ENCODE measurements at regions of chr17 and their contacts with region 1.

Region 1: GRCh38 chr17:7136266-7136877 is 21.8 kb upstream of the ASGR2 start:
- DNase-seq: peak; percentile 93
- H3K4me3 Mint-ChIP-seq: no peak overlapping the region
- H3K27ac Mint-ChIP-seq: no peak overlapping the region
- H3K4me1 Mint-ChIP-seq: peaks cover 17% of the 10 kb centered on the region
- H3K27me3 Mint-ChIP-seq: peaks cover 14% of the 10 kb centered on the region

Region 2: GRCh38 chr17:6913608-6914443 is 222.5 kb before region 1 on chr17:
- intact Hi-C with region 1: loop called (anchors 5 kb)
- DNase-seq: peak; percentile 92
- H3K4me3 Mint-ChIP-seq: peak overlapping the region; percentile 82
- H3K27ac Mint-ChIP-seq: no peak overlapping the region
- H3K4me1 Mint-ChIP-seq: peaks cover 20% of the 10 kb centered on the region
- H3K27me3 Mint-ChIP-seq: peaks cover 32% of the 10 kb centered on the region

Region 3: DNA sequence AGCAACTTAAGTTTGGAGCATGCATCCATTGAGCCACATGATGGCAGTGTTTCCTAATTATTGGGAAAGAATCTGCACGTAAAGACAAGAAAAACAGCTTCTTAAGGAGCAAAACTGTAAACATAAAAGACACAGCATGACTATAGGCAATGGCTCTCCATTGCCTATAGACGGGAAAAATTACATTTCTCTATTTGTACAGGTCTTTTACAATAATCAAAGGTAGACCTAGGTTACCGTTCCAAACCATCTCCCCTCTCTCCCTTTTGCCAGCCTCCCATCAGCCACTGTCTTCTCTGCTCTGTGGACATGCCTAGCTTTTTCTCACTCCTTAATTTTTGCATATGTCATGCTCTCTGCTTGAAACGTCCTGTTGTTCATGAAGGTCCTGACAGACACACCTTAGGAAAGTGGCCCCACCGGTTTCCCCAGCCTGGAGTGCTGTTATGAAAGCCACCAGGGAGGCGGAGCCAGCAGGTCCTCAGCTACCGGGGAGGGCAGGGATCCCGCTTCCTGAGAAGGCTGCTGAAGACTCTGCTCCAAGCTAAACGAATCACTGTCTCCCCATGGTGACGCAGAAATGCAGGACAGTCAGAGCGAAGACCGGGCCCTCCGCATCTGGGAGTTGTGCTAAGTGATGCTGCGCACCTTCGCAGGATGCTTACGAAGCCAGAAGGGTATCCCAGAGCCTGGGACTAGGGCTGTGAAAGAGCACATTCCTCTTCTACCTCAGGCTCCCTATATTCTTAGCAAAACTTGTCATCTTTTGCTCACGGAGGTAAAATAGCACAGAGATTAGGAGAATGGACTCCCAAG is 90.3 kb before region 1 on chr17:
- intact Hi-C with region 1: loop called (anchors 1 kb)
- DNase-seq: peak; percentile 87
- H3K4me3 Mint-ChIP-seq: peak overlapping the region; percentile 73
- H3K27ac Mint-ChIP-seq: peak overlapping the region; percentile 60
- H3K4me1 Mint-ChIP-seq: peaks cover 20% of the 10 kb centered on the region
- H3K27me3 Mint-ChIP-seq: peaks cover 15% of the 10 kb centered on the region

Region 4: GRCh38 chr17:7056386-7056785 is 80.0 kb before region 1 on chr17:
- intact Hi-C with region 1: loop called (anchors 1 kb)
- DNase-seq: no peak
- H3K4me3 Mint-ChIP-seq: no peak overlapping the region
- H3K27ac Mint-ChIP-seq: no peak overlapping the region
- H3K4me1 Mint-ChIP-seq: peaks cover 15% of the 10 kb centered on the region
- H3K27me3 Mint-ChIP-seq: peaks cover 5% of the 10 kb centered on the region

Region 5: DNA sequence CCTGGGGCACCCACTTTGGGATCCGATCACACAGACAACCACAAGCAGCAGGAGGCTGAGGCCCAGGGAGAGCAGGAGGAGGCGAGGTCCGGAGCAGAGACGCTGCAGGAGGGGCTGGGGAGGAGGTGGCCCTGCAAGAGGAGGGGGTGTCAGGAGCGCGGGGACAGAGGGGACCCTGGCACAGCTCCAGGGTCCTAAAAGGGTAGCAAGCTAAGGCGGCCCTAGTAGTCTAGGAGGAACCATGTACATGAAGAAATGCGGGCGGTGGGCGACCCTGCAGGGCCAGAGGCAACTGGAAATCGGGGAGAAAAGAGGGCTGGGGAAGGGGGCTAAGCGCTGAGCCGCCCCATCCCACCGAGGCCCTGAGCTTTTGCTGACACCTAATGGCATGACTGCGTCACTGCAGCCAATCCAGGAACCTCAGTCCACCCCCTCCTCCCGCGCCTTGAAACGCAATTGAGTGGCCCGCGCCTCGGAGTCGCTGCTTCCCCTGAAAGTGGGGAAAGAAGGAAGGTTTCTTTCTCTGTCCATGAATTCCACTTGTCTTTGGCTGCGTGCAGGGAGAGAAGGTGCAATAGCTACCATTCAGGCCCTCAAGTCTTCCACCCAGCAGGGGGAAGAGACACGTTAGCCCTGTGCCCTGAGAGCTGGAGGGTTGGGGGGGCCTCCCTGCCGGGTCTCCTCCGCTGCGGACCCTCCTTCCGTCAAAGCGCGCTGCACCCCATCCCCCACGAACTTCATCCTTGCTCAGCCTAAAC is 41.0 kb after region 1 on chr17:
- intact Hi-C with region 1: loop called (anchors 1 kb)
- DNase-seq: peak; percentile 91
- H3K4me3 Mint-ChIP-seq: peak overlapping the region; percentile 77
- H3K27ac Mint-ChIP-seq: peak overlapping the region; percentile 50
- H3K4me1 Mint-ChIP-seq: peaks cover 10% of the 10 kb centered on the region
- H3K27me3 Mint-ChIP-seq: peaks cover 14% of the 10 kb centered on the region